Caco-2 (cell line): ENCODE measurements at regions of chr3 and their contacts with region 1.

Region 1: DNA sequence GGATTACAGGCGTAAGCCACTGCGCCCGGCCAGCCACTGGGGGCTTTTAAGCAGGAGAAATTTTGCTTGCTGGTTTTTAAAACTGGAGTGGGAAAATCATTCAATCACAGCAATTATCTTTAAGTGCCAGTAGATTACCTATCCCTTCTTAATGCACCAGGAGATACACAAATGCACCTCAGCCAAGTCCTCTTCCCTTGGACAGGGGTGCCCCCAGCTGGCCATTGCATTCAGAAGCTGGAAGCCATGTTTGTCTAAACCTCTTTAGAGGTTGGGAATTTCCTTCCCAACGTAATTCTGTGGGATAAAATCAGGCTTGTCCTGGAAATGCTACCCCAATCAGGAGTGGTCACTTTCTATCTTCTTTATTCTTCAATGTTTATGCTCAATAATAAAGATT is 26.6 kb downstream of the MIX23 start:
- DNase-seq: peak; percentile 50 to 56
- H3K4me3 ChIP-seq: no peak overlapping the region
- H3K4me3 Mint-ChIP-seq: no peak overlapping the region
- H3K27ac Mint-ChIP-seq: no peak overlapping the region
- H3K4me1 ChIP-seq: 0 out of 2 replicates have a peak, but pooled peaks cover under 1% of the 10 kb centered on the region
- H3K4me1 Mint-ChIP-seq: no peaks in the 10 kb centered on the region
- H3K27me3 ChIP-seq: no peaks in the 10 kb centered on the region
- H3K27me3 Mint-ChIP-seq: no peaks in the 10 kb centered on the region
- CTCF ChIP-seq: peak; percentile 31 to 52

Region 2: DNA sequence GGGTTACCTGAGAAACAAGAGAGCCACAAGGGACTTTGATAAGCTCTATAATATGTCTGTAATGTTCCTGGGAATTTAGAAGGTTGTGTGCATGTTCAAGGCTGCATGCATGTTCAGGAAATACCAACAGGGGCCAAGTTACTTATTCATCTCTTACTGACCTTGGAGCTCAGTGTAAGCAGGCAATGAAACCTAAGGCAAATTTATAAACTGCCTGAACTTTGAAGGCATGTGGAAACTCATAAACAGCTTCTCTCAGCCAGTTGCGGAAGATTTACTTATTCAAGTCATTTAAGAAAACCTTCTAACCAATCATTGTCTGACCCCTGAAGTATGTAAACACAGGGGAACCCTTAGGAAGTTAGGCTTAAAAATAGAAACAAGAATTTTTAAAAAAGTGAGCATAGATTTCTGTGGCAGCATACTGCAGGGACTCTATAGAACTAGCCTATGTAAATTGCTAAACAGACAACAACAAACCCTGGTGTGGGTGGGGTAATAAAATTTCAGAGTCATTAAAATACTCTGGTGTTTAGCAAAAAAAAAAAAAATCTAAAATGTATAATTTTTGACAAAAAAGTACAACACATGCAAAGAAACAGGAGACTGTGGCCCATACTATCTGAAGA is 405.0 kb before region 1 on chr3:
- CTCF ChIA-PET with region 1: no interaction called
- POLR2A ChIA-PET with region 1: no interaction called
- intact Hi-C with region 1: no loop called
- DNase-seq: no peak
- H3K4me3 ChIP-seq: no peak overlapping the region
- H3K4me3 Mint-ChIP-seq: no peak overlapping the region
- H3K27ac Mint-ChIP-seq: no peak overlapping the region
- H3K4me1 ChIP-seq: peaks cover 5% of the 10 kb centered on the region; the same call in 1 of the 2 replicates
- H3K4me1 Mint-ChIP-seq: no peaks in the 10 kb centered on the region
- H3K27me3 ChIP-seq: no peaks in the 10 kb centered on the region
- H3K27me3 Mint-ChIP-seq: no peaks in the 10 kb centered on the region
- CTCF ChIP-seq: no peak

Region 3: DNA sequence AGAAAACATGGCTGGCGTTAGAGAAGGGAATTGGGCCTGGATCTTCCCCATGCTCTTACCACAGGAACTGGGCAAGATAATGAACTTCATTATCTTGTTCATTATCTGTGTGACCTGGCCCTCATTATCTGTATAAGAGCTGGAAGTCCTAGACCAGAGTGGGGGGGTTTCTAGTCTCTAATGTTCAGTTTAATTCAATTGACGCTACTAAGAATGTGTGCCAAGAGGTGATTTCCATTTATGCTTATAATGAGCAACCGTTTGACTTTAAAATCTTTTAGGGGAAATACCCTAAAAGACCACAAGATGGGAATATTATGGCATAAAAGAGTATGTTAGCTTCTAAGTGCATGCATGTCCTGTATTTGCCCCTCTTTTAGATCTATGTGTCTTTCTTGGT is 90.5 kb before region 1 on chr3:
- CTCF ChIA-PET with region 1: no interaction called
- POLR2A ChIA-PET with region 1: no interaction called
- intact Hi-C with region 1: loop called (anchors 2 kb)
- DNase-seq: no peak
- H3K4me3 ChIP-seq: no peak overlapping the region
- H3K4me3 Mint-ChIP-seq: no peak overlapping the region
- H3K27ac Mint-ChIP-seq: no peak overlapping the region
- H3K4me1 ChIP-seq: no peaks in the 10 kb centered on the region
- H3K4me1 Mint-ChIP-seq: no peaks in the 10 kb centered on the region
- H3K27me3 ChIP-seq: peaks cover 1% of the 10 kb centered on the region; the same call in 1 of the 2 replicates
- H3K27me3 Mint-ChIP-seq: peaks cover 7% of the 10 kb centered on the region
- CTCF ChIP-seq: no peak

Region 4: GRCh38 chr3:122305818-122306621 is 50.4 kb before region 1 on chr3:
- CTCF ChIA-PET with region 1: interaction called, 28 read pairs
- POLR2A ChIA-PET with region 1: no interaction called
- intact Hi-C with region 1: loop called (anchors 1 kb)
- DNase-seq: peak; percentile 43 to 48
- H3K4me3 ChIP-seq: no peak overlapping the region
- H3K4me3 Mint-ChIP-seq: peak overlapping the region; percentile 19
- H3K27ac Mint-ChIP-seq: no peak overlapping the region
- H3K4me1 ChIP-seq: 0 out of 2 replicates have a peak, but pooled peaks cover 2% of the 10 kb centered on the region
- H3K4me1 Mint-ChIP-seq: no peaks in the 10 kb centered on the region
- H3K27me3 ChIP-seq: no peaks in the 10 kb centered on the region
- H3K27me3 Mint-ChIP-seq: no peaks in the 10 kb centered on the region
- CTCF ChIP-seq: peak in 1 of 2 experiments; percentile 54

Region 5: GRCh38 chr3:122635789-122636188 is 279.4 kb after region 1 on chr3:
- CTCF ChIA-PET with region 1: no interaction called
- POLR2A ChIA-PET with region 1: no interaction called
- intact Hi-C with region 1: no loop called
- DNase-seq: no peak
- H3K4me3 ChIP-seq: no peak overlapping the region
- H3K4me3 Mint-ChIP-seq: no peak overlapping the region
- H3K27ac Mint-ChIP-seq: no peak overlapping the region
- H3K4me1 ChIP-seq: no peaks in the 10 kb centered on the region
- H3K4me1 Mint-ChIP-seq: no peaks in the 10 kb centered on the region
- H3K27me3 ChIP-seq: no peaks in the 10 kb centered on the region
- H3K27me3 Mint-ChIP-seq: no peaks in the 10 kb centered on the region
- CTCF ChIP-seq: no peak